AG04450 (cell line): ENCODE measurements at regions of chr17 and their contacts with region 1.

Region 1: GRCh38 chr17:43940630-43941029 is 1.6 kb downstream of the PPY start:
- DNase-seq: no peak
- H3K4me3 ChIP-seq: no peak overlapping the region
- H3K27ac ChIP-seq: no peak overlapping the region
- H3K27me3 ChIP-seq: peaks cover 34% of the 10 kb centered on the region
- CTCF ChIP-seq: peak; percentile 77

Region 2: GRCh38 chr17:43907425-43907981 is 33.1 kb before region 1 on chr17 and contains the start of gene MPP2:
- CTCF ChIA-PET with region 1: interaction called, 11 read pairs
- POLR2A ChIA-PET with region 1: no interaction called
- DNase-seq: peak; percentile 26
- H3K4me3 ChIP-seq: peak within 1 kb of the TSS; percentile 68
- H3K27ac ChIP-seq: peak within 1 kb of the TSS; percentile 21
- H3K27me3 ChIP-seq: peaks cover 42% of the 10 kb centered on the region
- CTCF ChIP-seq: peak; percentile 30
- polyA plus RNA-seq, gene MPP2: 2.4 and 2.5 TPM in 2 replicates

Region 3: GRCh38 chr17:43952717-43953666 is 12.4 kb after region 1 on chr17:
- CTCF ChIA-PET with region 1: interaction called, 10 read pairs
- POLR2A ChIA-PET with region 1: no interaction called
- DNase-seq: no peak
- H3K4me3 ChIP-seq: no peak overlapping the region
- H3K27ac ChIP-seq: no peak overlapping the region
- H3K27me3 ChIP-seq: peaks cover 66% of the 10 kb centered on the region
- CTCF ChIP-seq: no peak

Region 4: GRCh38 chr17:43966271-43966670 is 25.6 kb after region 1 on chr17:
- CTCF ChIA-PET with region 1: interaction called, 35 read pairs
- POLR2A ChIA-PET with region 1: no interaction called
- DNase-seq: no peak
- H3K4me3 ChIP-seq: no peak overlapping the region
- H3K27ac ChIP-seq: no peak overlapping the region
- H3K27me3 ChIP-seq: peaks cover 32% of the 10 kb centered on the region
- CTCF ChIP-seq: no peak

Region 5: GRCh38 chr17:44170499-44171201 is 230.0 kb after region 1 on chr17 and contains the start of gene ASB16:
- CTCF ChIA-PET with region 1: interaction called, 44 read pairs
- POLR2A ChIA-PET with region 1: no interaction called
- DNase-seq: no peak
- H3K4me3 ChIP-seq: peak within 1 kb of the TSS; percentile 29
- H3K27ac ChIP-seq: peak within 1 kb of the TSS; percentile 39
- H3K27me3 ChIP-seq: no peaks in the 10 kb centered on the region
- CTCF ChIP-seq: no peak
- polyA plus RNA-seq, gene ASB16: not detected in 2 replicates